Naive thymus-derived CD4-positive, alpha-beta T cell (primary cell): ENCODE measurements at regions of chr11 and their contacts with region 1.

Region 1: DNA sequence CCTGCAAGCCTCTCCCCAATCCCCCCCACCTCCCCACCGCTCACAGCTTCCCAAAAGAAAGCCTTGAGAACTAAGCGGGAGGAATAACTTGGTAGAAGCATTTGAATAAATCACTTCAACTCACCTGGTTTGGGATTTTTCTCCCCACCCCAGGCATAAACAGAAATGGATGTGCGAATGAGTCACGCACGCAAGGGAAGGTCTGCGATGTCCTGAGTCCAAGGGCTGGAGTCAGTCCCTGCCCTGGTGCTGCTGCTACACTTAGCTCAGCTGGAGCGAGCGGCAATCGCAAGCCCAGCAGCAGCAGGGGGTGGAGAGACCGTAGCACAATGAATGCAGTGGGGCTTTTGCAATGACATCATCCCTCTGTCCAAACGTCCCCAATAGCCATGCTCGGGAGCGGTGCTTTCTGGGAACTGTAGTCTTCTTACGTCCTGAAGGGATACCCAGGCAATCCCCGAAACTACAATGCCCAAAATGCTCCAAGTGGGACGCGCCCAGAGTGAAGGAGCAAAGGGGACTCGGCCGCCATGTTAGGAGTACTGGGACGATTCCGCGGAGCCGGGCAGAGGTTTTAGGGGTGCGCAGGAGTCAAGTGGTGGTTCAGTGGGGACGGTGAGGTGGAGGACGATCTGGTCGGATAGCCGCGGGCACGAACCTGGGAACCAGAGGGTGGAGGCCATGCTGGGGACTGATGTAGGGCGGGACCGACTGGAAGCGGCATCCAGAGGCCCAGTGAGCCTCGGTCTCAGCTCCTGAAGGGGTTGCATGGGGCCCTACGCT is at the start of gene RAB30:
- DNase-seq: peak; percentile 72 to 98 (median 92)
- ATAC-seq: peak; percentile 97
- H3K4me3 ChIP-seq: peak within 1 kb of the TSS; percentile 89
- H3K4me3 Mint-ChIP-seq: no peak within 1 kb of the TSS
- H3K27ac ChIP-seq: peak within 1 kb of the TSS; percentile 92
- H3K27ac Mint-ChIP-seq: no peak within 1 kb of the TSS
- H3K4me1 ChIP-seq: peaks cover 26 to 33% of the 10 kb centered on the region in 2 donors
- H3K4me1 Mint-ChIP-seq: peaks cover 0 to 43% (median 19%) of the 10 kb centered on the region in 7 donors
- H3K27me3 ChIP-seq: no peaks in the 10 kb centered on the region
- H3K27me3 Mint-ChIP-seq: peaks cover 0 to 4% (median 0%) of the 10 kb centered on the region in 5 donors
- total RNA-seq, gene RAB30: 7.4 to 50.2 (median 24.7) TPM

Region 2: GRCh38 chr11:82718307-82718706 is 353.5 kb before region 1 on chr11:
- CTCF ChIA-PET with region 1: no interaction called
- POLR2A ChIA-PET with region 1: no interaction called
- intact Hi-C with region 1: loop called in 1 of 2 experiments (anchors 5 kb)
- DNase-seq: peak in 5 of 9 donors; percentile 22 to 53 (median 34)
- ATAC-seq: peak; percentile 61
- H3K4me3 ChIP-seq: no peak overlapping the region
- H3K4me3 Mint-ChIP-seq: no peak overlapping the region
- H3K27ac ChIP-seq: no peak overlapping the region
- H3K27ac Mint-ChIP-seq: peak overlapping the region in 1 of 9 donors; percentile 87
- H3K4me1 ChIP-seq: no peaks in the 10 kb centered on the region
- H3K4me1 Mint-ChIP-seq: peaks cover 0 to 6% (median 4%) of the 10 kb centered on the region in 7 donors
- H3K27me3 ChIP-seq: no peaks in the 10 kb centered on the region
- H3K27me3 Mint-ChIP-seq: peaks cover 0 to 5% (median 0%) of the 10 kb centered on the region in 5 donors

Region 3: GRCh38 chr11:82927254-82927880 is 144.4 kb before region 1 on chr11:
- CTCF ChIA-PET with region 1: interaction called, 7 read pairs
- POLR2A ChIA-PET with region 1: interaction called, 5 read pairs
- intact Hi-C with region 1: loop called (anchors 2 kb)
- DNase-seq: peak in 7 of 9 donors; percentile 51 to 77 (median 67)
- ATAC-seq: peak; percentile 89
- H3K4me3 ChIP-seq: no peak overlapping the region
- H3K4me3 Mint-ChIP-seq: peak overlapping the region in 2 of 10 donors; percentile 10 to 63
- H3K27ac ChIP-seq: no peak overlapping the region
- H3K27ac Mint-ChIP-seq: peak overlapping the region in 8 of 9 donors; percentile 26 to 76 (median 52)
- H3K4me1 ChIP-seq: peaks cover 0 to 23% of the 10 kb centered on the region in 2 donors
- H3K4me1 Mint-ChIP-seq: peaks cover 10 to 55% (median 45%) of the 10 kb centered on the region in 7 donors
- H3K27me3 ChIP-seq: no peaks in the 10 kb centered on the region
- H3K27me3 Mint-ChIP-seq: no peaks in the 10 kb centered on the region

Region 4: GRCh38 chr11:82969811-82970210 is 101.9 kb before region 1 on chr11:
- CTCF ChIA-PET with region 1: interaction called, 4 read pairs
- POLR2A ChIA-PET with region 1: interaction called, 8 read pairs
- intact Hi-C with region 1: loop called in 1 of 2 experiments (anchors 2 kb)
- DNase-seq: peak in 2 of 9 donors; percentile 25 to 34
- ATAC-seq: no peak
- H3K4me3 ChIP-seq: no peak overlapping the region
- H3K4me3 Mint-ChIP-seq: peak overlapping the region in 7 of 10 donors; percentile 42 to 73 (median 58)
- H3K27ac ChIP-seq: no peak overlapping the region
- H3K27ac Mint-ChIP-seq: peak overlapping the region in 8 of 9 donors; percentile 68 to 93 (median 86)
- H3K4me1 ChIP-seq: peaks cover 6 to 13% of the 10 kb centered on the region in 2 donors
- H3K4me1 Mint-ChIP-seq: peaks cover 13 to 67% (median 58%) of the 10 kb centered on the region in 7 donors
- H3K27me3 ChIP-seq: no peaks in the 10 kb centered on the region
- H3K27me3 Mint-ChIP-seq: peaks cover 0 to 18% (median 0%) of the 10 kb centered on the region in 5 donors

Region 5: DNA sequence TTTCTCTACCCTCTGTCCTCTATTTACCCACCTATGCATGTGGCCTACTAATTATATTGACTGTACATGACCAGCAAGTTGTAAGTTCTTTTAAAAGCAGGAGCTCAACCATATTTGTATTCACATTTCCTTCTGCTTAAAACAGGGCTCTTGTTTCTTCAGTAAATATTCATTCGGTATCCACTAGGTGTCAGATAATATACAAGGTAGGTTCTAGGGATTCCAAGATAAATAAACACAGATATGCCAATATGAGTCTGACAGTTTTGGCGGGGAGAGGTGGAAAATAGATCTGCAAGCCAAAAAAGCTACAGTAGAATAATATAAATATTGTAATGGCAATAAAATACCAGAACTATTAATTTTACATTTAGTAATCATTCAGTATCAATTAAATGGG is 15.3 kb after region 1 on chr11:
- CTCF ChIA-PET with region 1: interaction called, 8 read pairs
- POLR2A ChIA-PET with region 1: interaction called, 15 read pairs
- intact Hi-C with region 1: loop called in 1 of 2 experiments (anchors 1 kb)
- DNase-seq: no peak
- ATAC-seq: no peak
- H3K4me3 ChIP-seq: no peak overlapping the region
- H3K4me3 Mint-ChIP-seq: no peak overlapping the region
- H3K27ac ChIP-seq: peak overlapping the region; percentile 10
- H3K27ac Mint-ChIP-seq: peak overlapping the region in 8 of 9 donors; percentile 10 to 74 (median 38)
- H3K4me1 ChIP-seq: peaks cover 0 to 4% of the 10 kb centered on the region in 2 donors
- H3K4me1 Mint-ChIP-seq: peaks cover 8 to 44% (median 32%) of the 10 kb centered on the region in 7 donors
- H3K27me3 ChIP-seq: no peaks in the 10 kb centered on the region
- H3K27me3 Mint-ChIP-seq: no peaks in the 10 kb centered on the region

Region 6: GRCh38 chr11:83193315-83194280 is 121.8 kb after region 1 on chr11 and contains the start of gene ANKRD42:
- CTCF ChIA-PET with region 1: interaction called, 4 read pairs
- POLR2A ChIA-PET with region 1: interaction called, 5 read pairs
- intact Hi-C with region 1: loop called (anchors 1 kb)
- DNase-seq: peak; percentile 66 to 90 (median 87)
- ATAC-seq: peak; percentile 84
- H3K4me3 ChIP-seq: peak within 1 kb of the TSS; percentile 89
- H3K4me3 Mint-ChIP-seq: peak within 1 kb of the TSS; percentile 92 to 100 (median 98)
- H3K27ac ChIP-seq: peak within 1 kb of the TSS; percentile 99
- H3K27ac Mint-ChIP-seq: peak within 1 kb of the TSS; percentile 96 to 100 (median 99)
- H3K4me1 ChIP-seq: peaks cover 22 to 29% of the 10 kb centered on the region in 2 donors
- H3K4me1 Mint-ChIP-seq: peaks cover 33 to 61% (median 50%) of the 10 kb centered on the region in 7 donors
- H3K27me3 ChIP-seq: no peaks in the 10 kb centered on the region
- H3K27me3 Mint-ChIP-seq: no peaks in the 10 kb centered on the region
- total RNA-seq, gene ANKRD42: 3.1 to 10.9 (median 7.0) TPM

Region 7: GRCh38 chr11:83285771-83286528 is 214.2 kb after region 1 on chr11 and contains the start of gene CCDC90B:
- CTCF ChIA-PET with region 1: no interaction called
- POLR2A ChIA-PET with region 1: interaction called, 3 read pairs
- intact Hi-C with region 1: loop called (anchors 1 kb)
- DNase-seq: peak; percentile 83 to 97 (median 96)
- ATAC-seq: peak; percentile 93
- H3K4me3 ChIP-seq: peak within 1 kb of the TSS; percentile 93
- H3K4me3 Mint-ChIP-seq: peak within 1 kb of the TSS; percentile 92 to 100 (median 98)
- H3K27ac ChIP-seq: peak within 1 kb of the TSS; percentile 95
- H3K27ac Mint-ChIP-seq: peak within 1 kb of the TSS; percentile 98 to 100 (median 99)
- H3K4me1 ChIP-seq: peaks cover 14 to 23% of the 10 kb centered on the region in 2 donors
- H3K4me1 Mint-ChIP-seq: peaks cover 19 to 52% (median 36%) of the 10 kb centered on the region in 7 donors
- H3K27me3 ChIP-seq: no peaks in the 10 kb centered on the region
- H3K27me3 Mint-ChIP-seq: peaks cover 0 to 11% (median 0%) of the 10 kb centered on the region in 5 donors
- total RNA-seq, gene CCDC90B: 19.1 to 40.8 (median 27.8) TPM